T-cell (primary cell): ENCODE measurements at regions of chr7 and their contacts with region 1.

Region 1: DNA sequence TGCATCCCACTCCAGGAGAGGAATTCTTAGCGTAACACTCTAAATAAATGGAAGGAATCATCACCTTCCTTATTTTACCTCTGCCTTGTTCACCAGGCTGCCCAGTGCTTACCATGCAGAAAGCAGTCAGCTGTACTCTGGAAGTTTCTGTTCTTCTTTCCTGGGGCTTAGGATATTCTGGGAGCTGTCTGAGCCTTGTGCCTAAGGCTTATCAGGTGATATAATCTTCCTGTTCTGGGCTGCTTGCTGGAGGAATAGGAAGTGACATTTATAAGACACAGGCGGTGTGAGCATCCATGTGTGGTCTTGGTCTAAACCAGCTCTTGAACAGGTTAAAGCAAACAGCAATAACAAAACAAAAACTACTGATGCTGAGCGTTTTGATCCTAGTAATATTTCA is 13.5 kb downstream of the KCTD7 start:
- DNase-seq: no peak
- ATAC-seq: no peak
- H3K4me3 ChIP-seq: no peak overlapping the region
- H3K4me3 Mint-ChIP-seq: no peak overlapping the region
- H3K27ac ChIP-seq: no peak overlapping the region
- H3K27ac Mint-ChIP-seq: peak overlapping the region in 1 of 2 donors; percentile 69
- H3K4me1 ChIP-seq: no peaks in the 10 kb centered on the region
- H3K4me1 Mint-ChIP-seq: peaks cover 6 to 21% (median 15%) of the 10 kb centered on the region in 3 donors
- H3K27me3 ChIP-seq: no peaks in the 10 kb centered on the region
- H3K27me3 Mint-ChIP-seq: no peaks in the 10 kb centered on the region

Region 2: GRCh38 chr7:66707825-66708224 is 65.6 kb after region 1 on chr7:
- CTCF ChIA-PET with region 1: no interaction called
- POLR2A ChIA-PET with region 1: no interaction called
- DNase-seq: no peak
- ATAC-seq: no peak
- H3K4me3 ChIP-seq: no peak overlapping the region
- H3K4me3 Mint-ChIP-seq: no peak overlapping the region
- H3K27ac ChIP-seq: no peak overlapping the region
- H3K27ac Mint-ChIP-seq: no peak overlapping the region
- H3K4me1 ChIP-seq: no peaks in the 10 kb centered on the region
- H3K4me1 Mint-ChIP-seq: peaks cover 0 to 5% (median 1%) of the 10 kb centered on the region in 3 donors
- H3K27me3 ChIP-seq: no peaks in the 10 kb centered on the region
- H3K27me3 Mint-ChIP-seq: no peaks in the 10 kb centered on the region

Region 3: DNA sequence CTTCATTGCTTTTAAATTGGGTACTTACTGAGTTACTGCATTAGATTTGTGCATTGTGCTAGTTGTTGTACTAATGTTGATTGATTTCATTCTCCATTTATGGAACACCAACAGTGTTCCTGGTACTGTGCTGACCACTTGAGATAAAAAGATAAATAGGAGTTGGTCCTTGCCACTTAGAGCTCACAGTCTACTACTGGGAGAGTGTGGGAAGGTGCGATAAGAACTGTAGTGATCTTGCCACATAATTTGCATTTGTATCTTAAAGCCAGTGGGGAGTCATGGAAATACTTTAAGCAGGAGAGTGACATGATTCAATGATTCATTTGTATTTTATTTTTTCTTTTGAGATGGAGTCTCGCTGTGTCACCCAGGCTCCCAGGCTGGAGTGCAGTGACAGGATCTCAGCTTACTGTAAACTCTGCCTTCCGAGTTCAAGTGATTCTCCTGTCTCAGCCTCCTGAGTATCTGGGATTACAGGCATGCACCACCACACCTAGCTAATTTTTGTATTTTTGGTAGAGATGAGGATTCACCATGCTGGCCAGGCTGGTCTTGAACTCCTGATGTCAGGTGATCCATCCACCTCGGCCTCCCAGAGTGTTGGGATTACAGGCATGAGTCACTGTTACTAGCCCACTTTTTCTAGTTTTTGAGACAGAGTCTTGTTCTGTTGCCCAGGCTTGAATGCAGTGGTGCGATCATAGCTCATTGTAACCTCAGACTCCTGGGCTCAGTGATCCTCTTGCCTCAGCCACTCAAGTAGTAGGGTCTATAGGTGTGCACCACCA is 227.7 kb after region 1 on chr7:
- CTCF ChIA-PET with region 1: no interaction called
- POLR2A ChIA-PET with region 1: interaction called in 1 of 2 experiments, 13 read pairs
- DNase-seq: no peak
- ATAC-seq: no peak
- H3K4me3 ChIP-seq: no peak overlapping the region
- H3K4me3 Mint-ChIP-seq: no peak overlapping the region
- H3K27ac ChIP-seq: no peak overlapping the region
- H3K27ac Mint-ChIP-seq: no peak overlapping the region
- H3K4me1 ChIP-seq: no peaks in the 10 kb centered on the region
- H3K4me1 Mint-ChIP-seq: peaks cover 0 to 5% (median 2%) of the 10 kb centered on the region in 3 donors
- H3K27me3 ChIP-seq: no peaks in the 10 kb centered on the region
- H3K27me3 Mint-ChIP-seq: no peaks in the 10 kb centered on the region